ENCODE measurements at regions of chr10 and their contacts with region 1.

Region 1: DNA sequence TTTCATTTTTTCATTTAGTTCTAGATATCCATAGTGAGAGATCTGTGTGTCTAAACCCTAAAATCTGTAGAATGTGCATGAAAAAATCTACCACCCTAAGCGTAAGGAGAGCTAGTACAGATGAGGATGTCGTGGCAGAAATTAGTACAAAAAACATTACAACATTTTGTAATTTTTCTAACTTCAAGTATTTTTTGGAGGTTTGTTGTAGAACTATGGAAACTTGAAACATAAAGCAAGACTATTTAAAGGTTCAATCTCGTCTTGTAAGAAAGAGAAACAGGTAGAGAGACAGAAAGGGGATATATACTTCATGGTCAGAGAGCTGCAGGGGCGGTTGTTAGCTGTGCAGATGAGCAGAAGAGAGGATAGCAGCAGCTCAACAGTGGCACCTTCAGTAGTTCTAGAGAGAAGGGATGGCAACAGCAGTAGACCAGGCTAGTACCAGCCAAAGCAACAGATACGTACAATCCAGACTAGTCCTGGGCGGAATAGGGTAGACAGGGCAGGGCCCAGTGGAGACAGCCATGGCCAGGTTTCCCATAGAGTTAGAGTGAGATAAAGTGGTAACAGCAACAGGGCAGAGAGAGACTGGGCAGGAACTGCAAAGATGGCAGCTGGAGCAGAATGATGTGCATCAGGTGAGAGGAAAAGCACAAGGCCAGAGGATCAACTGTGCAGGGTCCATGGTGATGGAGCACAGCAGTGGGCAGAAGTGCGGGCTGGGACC is 145.2 kb downstream of the FRMD4A start:
- DNase-seq: peak; percentile 52
- H3K4me3 Mint-ChIP-seq: peak overlapping the region; percentile 46
- H3K27ac Mint-ChIP-seq: peak overlapping the region; percentile 92
- H3K4me1 Mint-ChIP-seq: peaks cover 20% of the 10 kb centered on the region
- H3K27me3 Mint-ChIP-seq: peaks cover 48% of the 10 kb centered on the region

Region 2: GRCh38 chr10:13586676-13587355 is 598.7 kb before region 1 on chr10 and contains the start of gene PRPF18:
- intact Hi-C with region 1: loop called (anchors 2 kb)
- DNase-seq: peak; percentile 89
- H3K4me3 Mint-ChIP-seq: peak within 1 kb of the TSS; percentile 100
- H3K27ac Mint-ChIP-seq: peak within 1 kb of the TSS; percentile 98
- H3K4me1 Mint-ChIP-seq: peaks cover 16% of the 10 kb centered on the region
- H3K27me3 Mint-ChIP-seq: peaks cover 11% of the 10 kb centered on the region
- total RNA-seq, gene PRPF18: 24.8 and 25.6 TPM in 2 replicates

Region 3: DNA sequence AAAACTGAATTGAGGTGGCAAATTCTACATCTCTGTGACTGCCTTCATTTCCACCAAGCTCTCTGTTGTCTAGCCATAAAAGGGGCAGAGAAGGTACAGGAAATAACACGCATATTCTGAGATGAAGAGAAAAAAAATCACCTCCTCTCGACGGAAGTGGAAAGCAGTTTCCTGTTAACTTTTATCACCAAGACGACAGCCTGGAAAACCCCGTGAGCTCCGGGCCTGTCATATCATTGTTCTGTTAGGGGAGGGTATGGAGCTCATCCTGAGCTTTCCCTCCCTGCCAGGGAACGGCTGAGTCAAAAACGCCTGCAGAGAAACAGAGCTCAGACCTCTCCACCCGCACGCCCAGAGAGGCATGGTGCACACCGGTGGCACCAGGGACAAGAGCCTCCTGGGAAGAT is 398.5 kb before region 1 on chr10:
- intact Hi-C with region 1: loop called (anchors 1 kb)
- DNase-seq: peak; percentile 79
- H3K4me3 Mint-ChIP-seq: peak overlapping the region; percentile 68
- H3K27ac Mint-ChIP-seq: peak overlapping the region; percentile 95
- H3K4me1 Mint-ChIP-seq: peaks cover 7% of the 10 kb centered on the region
- H3K27me3 Mint-ChIP-seq: peaks cover 2% of the 10 kb centered on the region

Region 4: GRCh38 chr10:14009371-14010100 is 175.9 kb before region 1 on chr10:
- intact Hi-C with region 1: loop called (anchors 1 kb)
- DNase-seq: peak; percentile 37
- H3K4me3 Mint-ChIP-seq: peak overlapping the region; percentile 81
- H3K27ac Mint-ChIP-seq: peak overlapping the region; percentile 74
- H3K4me1 Mint-ChIP-seq: peaks cover 33% of the 10 kb centered on the region
- H3K27me3 Mint-ChIP-seq: peaks cover 19% of the 10 kb centered on the region

Region 5: GRCh38 chr10:14389978-14390590 is 204.6 kb after region 1 on chr10:
- intact Hi-C with region 1: loop called (anchors 1 kb)
- DNase-seq: peak; percentile 14
- H3K4me3 Mint-ChIP-seq: no peak overlapping the region
- H3K27ac Mint-ChIP-seq: peak overlapping the region; percentile 58
- H3K4me1 Mint-ChIP-seq: peaks cover 33% of the 10 kb centered on the region
- H3K27me3 Mint-ChIP-seq: peaks cover 43% of the 10 kb centered on the region

Region 6: GRCh38 chr10:14751014-14751896 is 565.8 kb after region 1 on chr10:
- intact Hi-C with region 1: no loop called
- DNase-seq: no peak
- H3K4me3 Mint-ChIP-seq: no peak overlapping the region
- H3K27ac Mint-ChIP-seq: no peak overlapping the region
- H3K4me1 Mint-ChIP-seq: no peaks in the 10 kb centered on the region
- H3K27me3 Mint-ChIP-seq: no peaks in the 10 kb centered on the region

Region 7: DNA sequence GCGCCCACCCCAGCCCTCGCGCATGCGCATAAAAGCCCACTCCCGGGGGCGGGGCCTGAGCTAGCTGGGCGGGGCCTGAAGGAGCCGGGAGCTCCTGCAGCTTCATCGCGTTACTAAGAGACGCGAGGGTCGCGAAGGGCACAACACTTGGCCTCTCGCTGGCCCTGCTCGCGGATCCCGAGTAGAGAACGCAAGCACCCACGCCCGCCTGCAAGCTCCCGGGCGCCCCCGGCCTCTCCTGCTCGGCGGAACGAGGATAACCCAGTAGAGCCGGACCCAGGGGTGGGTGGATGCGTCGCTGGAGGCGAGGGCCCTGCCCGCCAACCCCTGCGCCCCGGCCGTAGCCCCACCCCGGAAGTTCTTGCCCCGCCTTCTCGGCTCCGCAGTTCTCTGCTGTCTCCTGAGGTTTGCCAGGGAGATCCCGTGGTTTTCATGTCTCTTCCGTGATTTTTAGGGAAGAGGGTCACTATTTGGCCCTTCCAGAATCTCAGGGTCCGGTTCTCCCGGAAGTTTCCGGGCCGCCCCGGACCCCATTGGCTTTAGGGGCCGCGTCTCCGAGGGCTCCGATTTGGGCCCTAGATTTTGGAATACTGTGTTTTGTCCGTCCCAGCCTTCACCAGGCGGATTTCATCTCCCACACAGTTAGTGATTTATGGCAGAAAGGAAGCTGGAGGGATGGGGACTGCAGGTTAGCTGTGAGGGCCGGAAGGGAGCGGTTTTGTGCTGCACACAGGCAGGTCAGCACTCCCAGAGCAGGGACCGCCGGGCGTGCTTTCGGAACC is 774.0 kb after region 1 on chr10 and contains the start of gene MEIG1:
- intact Hi-C with region 1: loop called (anchors 2 kb)
- DNase-seq: peak; percentile 91
- H3K4me3 Mint-ChIP-seq: peak within 1 kb of the TSS; percentile 97
- H3K27ac Mint-ChIP-seq: peak within 1 kb of the TSS; percentile 95
- H3K4me1 Mint-ChIP-seq: peaks cover 22% of the 10 kb centered on the region
- H3K27me3 Mint-ChIP-seq: no peaks in the 10 kb centered on the region
- total RNA-seq, gene MEIG1: 0.44 TPM in 1 of 2 replicates, not detected in the other

Region 8: GRCh38 chr10:15960277-15960676 is 1774.8 kb after region 1 on chr10:
- intact Hi-C with region 1: no loop called
- DNase-seq: no peak
- H3K4me3 Mint-ChIP-seq: no peak overlapping the region
- H3K27ac Mint-ChIP-seq: no peak overlapping the region
- H3K4me1 Mint-ChIP-seq: no peaks in the 10 kb centered on the region
- H3K27me3 Mint-ChIP-seq: no peaks in the 10 kb centered on the region

Measured in activated T-helper 1 cell treated with anti-CD3 and anti-CD28 coated beads, Interleukin-12 subunit alpha, Interleukin-12 subunit beta, Interleukin-2, Interleukin-4 antibody, amounts not matched to agents 30 ng/mL and 10 ng/mL and 1 ng/mL, durations not matched to agents 14 hours and 24 hours and 36 hours (primary cell).